GM18951 (cell line): ENCODE measurements at regions of chr16 and their contacts with region 1.

Region 1: DNA sequence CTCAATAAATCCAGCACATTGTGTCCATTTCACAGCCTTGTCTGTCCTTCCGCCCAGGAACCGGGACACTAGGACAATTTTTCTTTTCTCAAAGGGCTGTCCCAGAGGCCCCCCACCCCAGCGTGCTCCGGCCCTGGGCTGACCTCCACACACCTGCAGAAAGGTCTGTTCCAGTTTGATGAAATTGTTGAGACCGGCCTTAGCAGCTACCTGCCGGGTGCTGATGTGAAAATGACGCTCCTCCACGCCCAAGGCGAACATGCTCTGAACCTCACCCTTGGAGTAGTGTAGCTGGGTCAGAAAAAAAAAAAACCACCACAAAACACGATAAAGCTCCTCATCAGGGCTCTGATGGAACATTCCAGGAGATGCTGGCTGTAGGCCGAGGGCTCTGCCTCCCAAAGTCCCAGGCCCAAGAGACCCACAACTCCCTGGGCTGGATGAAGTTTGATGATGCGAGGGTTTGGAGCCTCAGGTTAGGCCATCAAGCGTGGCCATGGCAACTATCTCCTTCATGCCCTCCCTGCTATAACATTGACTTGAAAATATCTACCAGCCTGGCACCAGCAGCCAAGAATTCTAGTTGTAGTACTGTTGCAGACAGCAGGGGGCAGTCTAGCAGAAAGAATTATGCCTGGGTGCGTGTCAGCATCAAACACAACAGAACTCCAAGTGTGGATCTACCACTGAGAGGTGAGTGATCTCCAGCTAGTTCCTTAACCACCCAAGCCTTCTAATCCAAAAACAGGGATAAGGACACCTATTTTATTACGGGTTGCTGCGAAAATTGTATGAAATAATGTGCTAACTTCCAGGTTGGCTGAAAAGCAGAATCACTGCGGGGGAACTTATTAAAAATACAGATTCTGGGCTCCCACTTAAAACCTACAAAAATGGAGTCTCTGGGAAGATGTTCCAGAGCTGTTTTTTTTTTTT is 62.1 kb downstream of the RMI2 start:
- POLR2A ChIP-seq: no peak

Region 2: DNA sequence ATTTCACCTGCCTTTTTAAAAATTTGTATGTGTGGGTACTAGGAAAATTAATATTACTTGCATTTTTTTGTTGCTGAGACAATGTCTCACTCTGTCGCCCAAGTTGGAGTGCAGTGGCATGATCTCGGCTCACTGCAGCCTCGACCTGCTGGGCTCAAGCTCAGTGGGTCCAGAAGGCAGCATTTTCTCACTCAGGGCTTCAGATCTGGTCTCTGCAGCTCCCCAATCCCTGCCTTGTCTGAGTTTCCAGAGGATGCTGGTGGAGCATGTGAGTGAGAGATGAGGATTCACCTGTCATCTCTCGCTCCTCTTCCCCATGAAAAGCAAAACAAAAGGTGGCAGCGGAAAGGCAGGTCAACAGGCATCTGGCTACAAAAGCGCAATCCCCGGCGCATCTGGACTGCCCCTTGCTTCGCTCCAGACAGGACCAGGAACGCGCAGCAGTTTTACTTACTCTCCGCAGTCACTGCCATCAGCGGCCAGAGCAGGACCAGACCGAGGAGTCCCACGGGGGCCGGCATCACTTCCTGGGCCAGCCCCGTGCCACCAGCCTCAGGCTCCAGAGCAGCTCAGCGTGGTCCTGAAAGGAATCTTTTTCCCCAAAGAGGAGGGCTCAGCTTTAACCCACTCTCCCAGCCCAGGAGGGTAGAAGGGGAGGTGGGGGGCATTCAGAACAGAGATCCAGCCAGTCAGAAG is 119.5 kb after region 1 on chr16:
- in situ Hi-C with region 1: loop called (anchors 10 kb)
- POLR2A ChIP-seq: no peak

Region 3: DNA sequence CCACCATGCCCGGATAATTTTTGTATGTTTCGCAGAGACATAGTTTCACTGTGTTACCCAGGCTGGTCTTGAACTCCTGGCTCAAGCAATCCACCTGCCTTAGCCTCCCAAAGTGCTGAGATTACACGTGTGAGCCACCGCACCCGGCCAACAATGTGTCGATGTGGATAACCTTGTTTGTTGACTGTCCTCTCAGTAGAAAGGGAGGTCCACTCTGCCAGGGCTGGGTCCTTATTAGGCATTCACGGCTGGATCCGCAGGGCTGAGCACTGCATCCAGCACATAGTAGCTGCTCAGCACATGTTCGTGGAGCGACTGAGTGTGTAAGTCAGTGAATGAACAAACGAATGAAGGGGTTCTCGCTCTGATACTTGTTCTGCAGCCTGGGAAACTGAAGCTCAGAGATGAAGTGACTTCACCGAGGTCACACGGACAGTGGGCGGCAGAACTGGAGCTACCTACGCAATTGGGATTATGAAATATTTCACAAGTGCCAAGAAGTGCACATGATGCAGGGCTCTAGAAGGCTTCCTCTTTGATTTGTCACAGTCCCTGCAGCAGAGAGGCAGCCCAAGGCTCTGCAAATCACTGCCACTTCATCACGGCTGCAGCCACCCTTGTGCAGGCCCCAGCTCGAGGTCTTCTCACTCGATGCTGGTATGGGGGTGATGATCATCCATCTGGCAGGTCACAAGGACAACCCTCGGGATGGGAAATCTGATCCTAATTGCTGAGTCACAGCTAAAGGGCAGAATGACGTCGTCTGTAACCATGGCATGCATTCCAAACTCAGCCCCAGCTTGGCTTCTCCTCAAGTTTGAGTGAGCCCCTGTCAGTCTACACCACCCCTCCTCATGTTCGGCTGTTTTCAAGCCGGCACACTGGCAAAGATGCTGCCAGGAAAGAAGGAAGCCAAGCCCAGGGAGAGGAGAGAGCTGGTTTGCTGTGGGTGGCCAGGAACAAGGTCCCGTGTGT is 232.9 kb after region 1 on chr16:
- in situ Hi-C with region 1: loop called (anchors 5 kb)
- POLR2A ChIP-seq: no peak

Region 4: GRCh38 chr16:11799509-11800381 is 392.4 kb after region 1 on chr16:
- in situ Hi-C with region 1: loop called (anchors 25 kb)
- POLR2A ChIP-seq: no peak

Region 5: DNA sequence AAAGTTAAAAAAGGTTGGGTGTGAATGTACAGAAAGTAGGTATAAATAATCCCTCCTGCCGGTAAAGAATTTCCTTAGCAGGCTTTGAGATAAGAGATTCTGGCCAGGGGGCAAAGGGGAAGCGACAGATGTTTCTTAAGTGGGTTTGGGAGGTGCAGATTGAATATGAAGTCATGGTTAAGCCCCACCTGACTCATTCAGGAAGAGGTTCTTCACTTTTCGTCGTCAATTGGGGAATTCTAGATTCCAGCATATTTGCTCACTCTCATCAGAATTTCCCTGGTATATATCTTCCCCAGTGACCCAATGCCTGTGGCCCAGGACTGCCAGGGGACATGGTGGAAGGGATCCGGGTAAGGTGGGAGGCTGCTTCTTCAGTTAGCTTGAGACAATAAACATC is 1268.5 kb after region 1 on chr16:
- in situ Hi-C with region 1: no loop called
- POLR2A ChIP-seq: no peak